ENCODE measurements at regions of chr14 and their contacts with region 1.

Region 1: GRCh38 chr14:76918751-76919543 is 92.7 kb downstream of the LRRC74A start:
- DNase-seq: peak; percentile 96
- H3K4me3 ChIP-seq: no peak overlapping the region
- H3K27me3 ChIP-seq: no peaks in the 10 kb centered on the region
- CTCF ChIP-seq: no peak

Region 2: GRCh38 chr14:76904740-76905438 is 14.1 kb before region 1 on chr14:
- CTCF ChIA-PET with region 1: interaction called, 66 read pairs
- POLR2A ChIA-PET with region 1: interaction called, 9 read pairs
- DNase-seq: peak; percentile 89
- H3K4me3 ChIP-seq: peak overlapping the region; percentile 16
- H3K27me3 ChIP-seq: no peaks in the 10 kb centered on the region
- CTCF ChIP-seq: no peak

Region 3: GRCh38 chr14:76947078-76947837 is 28.3 kb after region 1 on chr14:
- CTCF ChIA-PET with region 1: interaction called, 31 read pairs
- POLR2A ChIA-PET with region 1: no interaction called
- DNase-seq: no peak
- H3K4me3 ChIP-seq: no peak overlapping the region
- H3K27me3 ChIP-seq: no peaks in the 10 kb centered on the region
- CTCF ChIP-seq: peak; percentile 65

Region 4: GRCh38 chr14:77028384-77029231 is 109.7 kb after region 1 on chr14 and contains the start of gene IRF2BPL:
- CTCF ChIA-PET with region 1: interaction called, 95 read pairs
- POLR2A ChIA-PET with region 1: interaction called, 12 read pairs
- DNase-seq: peak; percentile 95
- H3K4me3 ChIP-seq: peak within 1 kb of the TSS; percentile 73
- H3K27me3 ChIP-seq: no peaks in the 10 kb centered on the region
- CTCF ChIP-seq: no peak
- polyA plus RNA-seq, gene IRF2BPL: 11.3 and 17.6 TPM in 2 replicates

Region 5: DNA sequence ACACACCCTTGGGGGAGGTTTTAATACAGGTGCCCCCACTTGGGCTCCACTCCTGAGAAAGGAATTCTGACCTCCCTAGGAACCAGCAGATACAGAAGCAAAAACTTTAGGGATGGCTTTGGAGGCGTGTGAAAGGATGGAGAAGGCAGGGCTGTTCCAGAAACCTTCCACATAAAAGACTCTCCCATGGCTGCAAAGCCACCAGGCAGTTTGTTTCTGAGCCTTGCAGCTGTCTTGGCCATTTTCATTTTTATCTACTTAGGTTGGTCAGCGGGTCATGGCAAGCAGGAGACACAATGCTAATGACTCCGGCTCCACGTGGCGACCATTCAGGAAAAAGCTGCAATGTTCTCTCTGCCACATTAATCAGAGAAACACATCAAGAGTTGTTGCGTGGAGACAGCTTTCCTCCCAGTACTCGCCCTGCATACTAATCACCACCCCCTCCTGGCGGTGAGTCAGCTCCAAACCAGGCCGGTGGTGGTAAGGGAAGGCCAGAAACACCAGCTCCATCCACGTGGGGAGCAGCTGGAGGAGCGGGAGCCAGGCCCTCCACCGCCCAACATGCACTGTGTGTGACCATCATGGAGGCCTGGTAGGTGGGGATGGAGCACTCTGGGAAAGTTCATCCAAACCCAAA is 140.4 kb after region 1 on chr14:
- CTCF ChIA-PET with region 1: interaction called, 316 read pairs
- POLR2A ChIA-PET with region 1: interaction called, 4 read pairs
- DNase-seq: peak; percentile 67
- H3K4me3 ChIP-seq: no peak overlapping the region
- H3K27me3 ChIP-seq: no peaks in the 10 kb centered on the region
- CTCF ChIP-seq: peak; percentile 46

Region 6: GRCh38 chr14:77470192-77470870 is 551.4 kb after region 1 on chr14:
- CTCF ChIA-PET with region 1: no interaction called
- POLR2A ChIA-PET with region 1: interaction called, 11 read pairs
- DNase-seq: no peak
- H3K4me3 ChIP-seq: no peak overlapping the region
- H3K27me3 ChIP-seq: peaks cover 8% of the 10 kb centered on the region; the same call in 1 of the 2 replicates
- CTCF ChIP-seq: no peak